ENCODE measurements at regions of chr10 and their contacts with region 1.

Region 1: DNA sequence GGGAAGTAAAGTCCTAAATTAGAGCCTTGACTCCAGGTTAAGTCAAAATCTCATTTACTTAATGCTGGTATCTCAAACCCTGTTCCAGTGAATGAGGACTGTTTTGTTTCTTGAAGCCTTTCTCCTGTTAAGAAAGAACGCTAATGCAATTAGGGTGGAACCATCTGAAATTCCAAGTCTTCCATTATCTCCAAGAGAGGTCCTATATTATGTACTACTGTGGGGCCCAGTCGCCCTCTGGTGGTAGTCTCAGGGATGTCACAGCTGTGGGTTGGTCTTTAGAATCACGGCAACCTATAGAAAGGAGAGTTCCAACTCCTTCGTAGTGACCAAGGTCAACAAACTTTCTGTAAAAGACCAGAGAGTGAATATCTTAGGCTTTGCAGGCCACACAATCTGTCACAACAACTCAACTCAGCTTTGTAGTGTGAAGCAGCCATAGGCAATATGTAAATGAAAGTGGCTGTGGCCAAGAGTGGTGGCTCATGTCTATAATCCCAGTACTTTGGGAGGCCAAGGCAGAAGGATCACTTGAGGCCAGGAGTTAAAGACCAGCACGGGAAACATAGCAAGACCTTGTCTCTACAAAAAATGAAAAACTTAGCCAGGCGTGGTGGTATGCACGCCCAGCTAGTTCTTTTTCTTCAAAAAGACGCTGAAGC is 9.3 kb downstream of the RPP38 start:
- DNase-seq: peak; percentile 53
- H3K4me3 ChIP-seq: no peak overlapping the region
- H3K27ac ChIP-seq: no peak overlapping the region
- H3K4me1 ChIP-seq: no peaks in the 10 kb centered on the region
- H3K27me3 ChIP-seq: no peaks in the 10 kb centered on the region
- CTCF ChIP-seq: peak; percentile 96 to 98

Region 2: DNA sequence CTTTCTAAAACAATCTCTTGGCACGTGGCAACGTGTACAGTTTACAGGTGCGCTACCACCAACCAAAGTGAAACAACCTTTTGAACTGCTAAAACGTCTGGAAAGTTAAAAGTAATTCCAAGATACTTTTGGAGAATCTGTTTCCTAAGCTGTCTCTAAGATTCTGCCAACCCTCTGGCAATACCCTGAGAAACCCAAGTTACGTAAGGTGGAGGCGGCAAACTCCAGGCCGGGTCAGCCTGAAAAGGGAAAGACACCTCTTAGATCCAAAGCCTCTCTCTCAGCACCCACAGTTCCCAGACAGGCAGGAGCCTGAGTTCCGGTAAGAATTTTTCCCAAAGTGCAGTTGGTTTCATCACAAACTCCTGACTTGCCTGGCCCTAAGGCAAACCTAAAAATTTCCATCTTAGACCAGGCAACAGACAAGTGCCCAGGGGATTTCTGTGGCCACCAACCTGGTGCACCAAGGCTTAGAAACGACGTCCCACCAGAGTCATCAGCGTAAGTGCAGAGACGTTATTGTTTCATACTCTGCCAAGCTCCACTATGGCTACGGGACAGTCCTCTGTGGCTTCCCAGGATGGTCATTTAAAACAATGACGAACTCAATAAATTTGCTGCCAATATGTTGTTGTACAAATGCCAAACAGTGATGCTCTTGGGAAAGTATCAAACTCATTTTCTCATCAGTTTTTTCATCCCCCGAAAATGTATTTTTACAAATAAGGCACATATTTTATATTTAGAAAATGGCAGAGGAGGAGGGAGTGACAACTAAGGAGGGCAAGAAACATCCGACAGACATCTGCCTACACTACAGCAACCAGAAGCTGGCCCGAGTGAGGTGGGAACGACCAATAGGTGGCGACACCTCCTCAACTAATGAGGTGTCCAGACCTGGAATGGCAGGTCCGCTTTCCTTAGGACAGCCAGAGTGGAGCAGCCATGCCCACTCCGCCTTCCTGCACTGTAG is 570.0 kb before region 1 on chr10:
- CTCF ChIA-PET with region 1: no interaction called
- dilution Hi-C with region 1: no loop called
- in situ Hi-C with region 1: loop called in 1 of 2 experiments (anchors 25 kb)
- intact Hi-C with region 1: loop called (anchors 1 kb)
- DNase-seq: peak; percentile 59
- H3K4me3 ChIP-seq: no peak overlapping the region
- H3K27ac ChIP-seq: no peak overlapping the region
- H3K4me1 ChIP-seq: peaks cover 4% of the 10 kb centered on the region
- H3K27me3 ChIP-seq: no peaks in the 10 kb centered on the region
- CTCF ChIP-seq: peak; percentile 75 to 85

Region 3: DNA sequence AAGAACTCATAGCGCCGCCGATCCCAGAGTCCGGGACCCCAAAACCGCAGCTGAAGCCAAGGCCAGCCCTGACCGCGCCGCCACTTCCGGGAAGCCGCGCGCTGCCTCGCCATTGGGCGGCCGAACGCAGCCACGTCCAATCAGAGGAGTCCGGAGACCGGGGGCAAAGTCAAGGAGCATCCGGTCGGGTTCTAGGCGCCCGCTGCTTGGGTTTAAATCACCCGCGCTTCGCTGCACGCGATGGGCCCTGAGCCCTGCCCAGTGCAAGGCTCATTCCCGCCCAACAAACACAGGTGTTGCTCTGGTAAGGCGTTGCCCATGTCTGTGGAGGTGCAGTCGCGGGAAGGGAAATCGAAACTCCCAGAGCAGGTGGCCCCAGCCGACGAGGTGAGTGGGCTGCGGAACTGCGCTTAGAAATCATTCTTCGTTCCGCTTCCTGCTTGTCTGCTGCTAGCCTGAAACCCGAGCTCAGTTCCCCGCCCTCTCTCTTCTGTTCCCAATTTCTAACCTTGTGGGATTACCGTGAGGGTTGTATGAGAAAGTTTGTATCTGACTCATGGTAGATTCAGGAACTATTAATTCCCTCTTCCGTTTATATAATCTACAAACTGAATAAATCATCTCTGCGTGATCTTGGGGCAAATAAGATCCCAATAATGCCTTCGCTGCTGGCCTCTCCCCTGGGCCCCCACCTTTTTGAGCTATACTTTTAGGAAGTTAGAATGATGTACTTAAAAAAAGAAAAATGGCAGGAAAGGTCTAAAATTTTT is 152.3 kb before region 1 on chr10 and contains the start of gene DCLRE1C:
- CTCF ChIA-PET with region 1: interaction called, 4 read pairs
- dilution Hi-C with region 1: no loop called
- in situ Hi-C with region 1: no loop called
- intact Hi-C with region 1: loop called (anchors 1 kb)
- DNase-seq: peak; percentile 96
- H3K4me3 ChIP-seq: peak within 1 kb of the TSS; percentile 63 to 83 (median 70)
- H3K27ac ChIP-seq: peak within 1 kb of the TSS; percentile 86
- H3K4me1 ChIP-seq: peaks cover 16% of the 10 kb centered on the region
- H3K27me3 ChIP-seq: no peaks in the 10 kb centered on the region
- CTCF ChIP-seq: no peak
- total RNA-seq, gene DCLRE1C: 8.8 to 9.6 TPM

Region 4: DNA sequence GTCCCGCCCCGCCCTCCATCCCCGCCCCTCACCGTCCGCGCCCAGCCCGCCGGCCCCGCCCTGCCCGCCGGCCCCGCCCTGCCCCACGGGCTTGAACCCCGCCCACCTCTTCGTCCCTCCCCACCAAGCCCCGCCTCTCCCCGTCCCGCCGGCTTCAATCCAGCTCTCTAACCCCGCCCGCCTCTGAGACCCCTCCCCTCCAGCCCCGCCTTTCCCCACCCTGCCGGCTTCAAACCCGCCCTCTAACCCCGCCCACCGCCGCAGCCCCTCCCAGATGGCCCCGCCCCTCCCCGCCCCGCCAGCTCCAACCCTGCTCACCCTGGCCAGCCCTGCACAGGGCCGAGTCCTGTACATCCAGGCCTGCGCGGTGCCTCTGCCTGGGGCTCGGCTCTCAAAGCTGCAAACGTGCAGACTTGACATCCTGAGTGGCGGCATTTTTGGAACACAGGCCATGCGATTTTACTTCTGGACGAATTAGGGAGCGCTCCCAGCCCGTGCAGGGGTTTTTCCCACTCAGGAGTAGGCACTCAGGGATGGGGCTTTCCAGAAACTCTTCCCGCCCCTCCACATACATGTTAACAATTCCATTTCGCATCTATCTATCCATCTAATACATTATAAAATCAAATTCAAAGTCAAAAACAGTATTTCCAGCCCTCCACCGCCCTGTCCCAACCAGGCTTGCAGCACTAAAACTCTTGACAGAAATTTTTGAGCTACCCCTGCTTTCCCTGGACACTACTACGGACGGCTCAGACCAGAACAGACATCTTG is 62.5 kb after region 1 on chr10:
- CTCF ChIA-PET with region 1: no interaction called
- dilution Hi-C with region 1: no loop called
- in situ Hi-C with region 1: no loop called
- intact Hi-C with region 1: loop called (anchors 5 kb)
- DNase-seq: peak; percentile 87
- H3K4me3 ChIP-seq: peak overlapping the region in 1 of 3 experiments; percentile 16
- H3K27ac ChIP-seq: no peak overlapping the region
- H3K4me1 ChIP-seq: peaks cover 28% of the 10 kb centered on the region
- H3K27me3 ChIP-seq: no peaks in the 10 kb centered on the region
- CTCF ChIP-seq: no peak